Caco-2 (cell line): ENCODE measurements at regions of chr9 and their contacts with region 1.

Region 1: GRCh38 chr9:32069969-32070368 is 314.5 kb upstream of the ACO1 start:
- DNase-seq: no peak
- H3K4me3 ChIP-seq: no peak overlapping the region
- H3K4me3 Mint-ChIP-seq: no peak overlapping the region
- H3K27ac Mint-ChIP-seq: no peak overlapping the region
- H3K4me1 ChIP-seq: no peaks in the 10 kb centered on the region
- H3K4me1 Mint-ChIP-seq: no peaks in the 10 kb centered on the region
- H3K27me3 ChIP-seq: no peaks in the 10 kb centered on the region
- H3K27me3 Mint-ChIP-seq: peaks cover 9% of the 10 kb centered on the region
- CTCF ChIP-seq: no peak

Region 2: GRCh38 chr9:32011049-32011448 is 58.9 kb before region 1 on chr9:
- CTCF ChIA-PET with region 1: no interaction called
- POLR2A ChIA-PET with region 1: no interaction called
- intact Hi-C with region 1: loop called (anchors 10 kb)
- DNase-seq: no peak
- H3K4me3 ChIP-seq: no peak overlapping the region
- H3K4me3 Mint-ChIP-seq: no peak overlapping the region
- H3K27ac Mint-ChIP-seq: no peak overlapping the region
- H3K4me1 ChIP-seq: no peaks in the 10 kb centered on the region
- H3K4me1 Mint-ChIP-seq: no peaks in the 10 kb centered on the region
- H3K27me3 ChIP-seq: no peaks in the 10 kb centered on the region
- H3K27me3 Mint-ChIP-seq: no peaks in the 10 kb centered on the region
- CTCF ChIP-seq: no peak

Region 3: DNA sequence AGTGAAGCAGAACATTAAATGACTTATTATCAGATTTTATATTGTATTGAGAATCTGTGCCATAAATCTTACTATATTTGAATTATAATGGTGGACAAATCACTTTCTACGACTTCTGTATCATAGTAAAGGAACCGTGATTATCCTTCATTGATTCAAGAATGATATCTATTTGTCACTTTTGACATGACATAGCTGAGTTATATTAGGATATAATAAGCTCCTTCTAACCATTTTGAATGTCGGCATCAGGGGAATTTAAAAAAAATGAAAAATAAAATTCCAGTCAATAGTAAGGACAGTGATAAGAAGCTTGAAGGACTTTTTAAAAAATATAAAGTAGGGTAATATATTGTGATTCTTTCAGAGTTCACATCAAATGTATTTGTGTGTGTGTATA is 24.5 kb before region 1 on chr9:
- CTCF ChIA-PET with region 1: no interaction called
- POLR2A ChIA-PET with region 1: no interaction called
- intact Hi-C with region 1: no loop called
- DNase-seq: no peak
- H3K4me3 ChIP-seq: no peak overlapping the region
- H3K4me3 Mint-ChIP-seq: no peak overlapping the region
- H3K27ac Mint-ChIP-seq: no peak overlapping the region
- H3K4me1 ChIP-seq: no peaks in the 10 kb centered on the region
- H3K4me1 Mint-ChIP-seq: no peaks in the 10 kb centered on the region
- H3K27me3 ChIP-seq: no peaks in the 10 kb centered on the region
- H3K27me3 Mint-ChIP-seq: no peaks in the 10 kb centered on the region
- CTCF ChIP-seq: no peak

Region 4: DNA sequence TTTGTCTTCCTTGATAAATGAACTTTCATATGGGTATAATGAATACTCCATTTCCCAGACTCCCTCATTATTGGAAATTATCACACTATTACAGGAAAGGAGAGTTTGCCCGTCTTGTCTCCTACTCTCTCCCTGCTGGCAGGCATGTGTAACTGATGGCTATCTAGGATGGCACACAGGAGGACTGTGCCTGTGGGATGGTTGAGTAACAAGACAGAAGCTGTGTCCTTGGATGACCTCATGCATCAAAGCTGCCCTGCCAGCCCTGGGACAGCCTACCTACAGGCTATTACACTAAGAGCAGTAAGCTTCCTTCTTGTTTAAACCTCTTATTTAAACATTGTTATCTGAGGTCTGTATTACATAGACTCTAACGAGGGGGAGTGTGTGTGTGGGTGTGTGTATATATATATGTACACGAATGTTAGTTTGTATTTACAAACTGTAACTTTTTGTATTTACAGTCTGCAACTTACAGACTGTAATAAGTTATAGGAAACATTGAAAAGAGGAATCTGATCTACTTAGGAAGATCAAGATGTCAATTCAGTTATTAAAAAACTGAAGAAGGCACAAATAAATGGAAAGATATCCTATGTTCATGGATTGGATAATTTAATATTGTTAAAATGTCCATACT is 66.9 kb after region 1 on chr9:
- CTCF ChIA-PET with region 1: no interaction called
- POLR2A ChIA-PET with region 1: no interaction called
- intact Hi-C with region 1: no loop called
- DNase-seq: peak; percentile 40
- H3K4me3 ChIP-seq: no peak overlapping the region
- H3K4me3 Mint-ChIP-seq: no peak overlapping the region
- H3K27ac Mint-ChIP-seq: no peak overlapping the region
- H3K4me1 ChIP-seq: no peaks in the 10 kb centered on the region
- H3K4me1 Mint-ChIP-seq: peaks cover 11% of the 10 kb centered on the region
- H3K27me3 ChIP-seq: no peaks in the 10 kb centered on the region
- H3K27me3 Mint-ChIP-seq: peaks cover 6% of the 10 kb centered on the region
- CTCF ChIP-seq: no peak

Region 5: DNA sequence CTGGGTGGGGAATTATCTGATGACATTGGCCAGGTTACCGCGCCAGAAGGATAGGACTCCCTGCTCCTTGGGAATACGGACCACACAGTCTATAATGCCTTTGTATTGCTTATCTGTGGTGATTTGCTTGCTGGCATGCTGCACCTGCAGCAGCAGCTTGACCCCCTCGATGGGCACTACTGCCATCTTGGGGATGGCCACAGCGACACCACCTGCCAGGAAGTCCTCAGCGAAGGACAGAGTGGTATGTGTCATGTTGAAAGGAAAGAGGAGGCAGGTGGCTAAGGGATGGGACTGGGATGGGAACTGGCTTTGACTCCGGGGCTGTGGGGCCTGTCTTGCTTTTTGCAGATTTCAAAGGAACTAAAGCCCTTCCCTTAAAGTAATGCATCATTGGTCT is 264.1 kb after region 1 on chr9:
- CTCF ChIA-PET with region 1: no interaction called
- POLR2A ChIA-PET with region 1: no interaction called
- intact Hi-C with region 1: no loop called
- DNase-seq: no peak
- H3K4me3 ChIP-seq: no peak overlapping the region
- H3K4me3 Mint-ChIP-seq: no peak overlapping the region
- H3K27ac Mint-ChIP-seq: no peak overlapping the region
- H3K4me1 ChIP-seq: no peaks in the 10 kb centered on the region
- H3K4me1 Mint-ChIP-seq: no peaks in the 10 kb centered on the region
- H3K27me3 ChIP-seq: no peaks in the 10 kb centered on the region
- H3K27me3 Mint-ChIP-seq: peaks cover 3% of the 10 kb centered on the region
- CTCF ChIP-seq: no peak